Testis (tissue), 5 donors: ENCODE measurements at regions of chr6 and their contacts with region 1.

Region 1: GRCh38 chr6:44265007-44265721 is at the start of gene NFKBIE:
- DNase-seq: peak; percentile 98
- H3K4me3 ChIP-seq: peak within 1 kb of the TSS; percentile 85 to 87
- H3K27ac ChIP-seq: peak within 1 kb of the TSS; percentile 77 to 87
- H3K4me1 ChIP-seq: peaks cover 23% of the 10 kb centered on the region
- H3K27me3 ChIP-seq: no peaks in the 10 kb centered on the region
- CTCF ChIP-seq: peak in 1 of 3 experiments; percentile 25
- POLR2A ChIP-seq: no peak
- total RNA-seq, gene NFKBIE: 18.3 to 29.2 TPM

Region 2: DNA sequence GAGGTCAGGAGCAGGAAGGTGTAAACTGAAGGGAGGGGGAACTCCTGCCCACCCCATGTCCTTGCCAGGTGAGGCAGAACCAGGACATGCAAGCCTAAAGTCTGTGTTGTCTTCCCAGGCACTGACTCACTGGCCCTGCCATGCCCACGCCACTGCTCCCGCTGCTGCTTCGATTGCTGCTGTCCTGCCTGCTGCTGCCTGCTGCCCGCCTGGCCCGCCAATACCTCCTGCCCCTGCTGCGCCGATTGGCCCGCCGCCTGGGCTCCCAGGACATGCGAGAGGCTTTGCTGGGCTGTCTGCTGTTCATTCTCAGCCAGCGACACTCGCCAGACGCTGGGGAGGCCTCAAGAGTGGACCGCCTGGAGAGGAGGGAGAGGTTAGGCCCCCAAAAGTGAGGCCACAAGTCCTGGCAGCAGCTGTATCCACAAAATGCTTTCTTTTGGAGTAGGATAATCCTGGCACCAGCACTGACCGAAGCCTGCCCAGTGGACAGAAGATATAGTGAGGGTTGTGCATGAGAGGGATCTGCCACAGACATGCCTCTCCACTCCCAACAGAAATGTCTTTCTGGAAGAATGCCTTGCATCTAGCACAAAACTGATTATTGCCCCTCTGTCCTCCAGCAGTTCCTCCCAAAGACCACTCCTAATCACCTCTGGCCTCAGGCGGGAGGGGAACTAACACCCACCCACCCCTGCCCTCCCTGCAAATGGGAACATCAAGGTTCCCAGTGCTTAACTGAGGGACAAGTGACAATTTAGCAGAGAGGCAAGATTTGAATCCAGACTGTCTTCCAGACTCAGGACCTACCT is 47.6 kb before region 1 on chr6:
- intact Hi-C with region 1: no loop called
- DNase-seq: no peak
- H3K4me3 ChIP-seq: no peak overlapping the region
- H3K27ac ChIP-seq: peak overlapping the region; percentile 61 to 92
- H3K4me1 ChIP-seq: peaks cover 44% of the 10 kb centered on the region
- H3K27me3 ChIP-seq: no peaks in the 10 kb centered on the region
- CTCF ChIP-seq: no peak
- POLR2A ChIP-seq: no peak

Region 3: DNA sequence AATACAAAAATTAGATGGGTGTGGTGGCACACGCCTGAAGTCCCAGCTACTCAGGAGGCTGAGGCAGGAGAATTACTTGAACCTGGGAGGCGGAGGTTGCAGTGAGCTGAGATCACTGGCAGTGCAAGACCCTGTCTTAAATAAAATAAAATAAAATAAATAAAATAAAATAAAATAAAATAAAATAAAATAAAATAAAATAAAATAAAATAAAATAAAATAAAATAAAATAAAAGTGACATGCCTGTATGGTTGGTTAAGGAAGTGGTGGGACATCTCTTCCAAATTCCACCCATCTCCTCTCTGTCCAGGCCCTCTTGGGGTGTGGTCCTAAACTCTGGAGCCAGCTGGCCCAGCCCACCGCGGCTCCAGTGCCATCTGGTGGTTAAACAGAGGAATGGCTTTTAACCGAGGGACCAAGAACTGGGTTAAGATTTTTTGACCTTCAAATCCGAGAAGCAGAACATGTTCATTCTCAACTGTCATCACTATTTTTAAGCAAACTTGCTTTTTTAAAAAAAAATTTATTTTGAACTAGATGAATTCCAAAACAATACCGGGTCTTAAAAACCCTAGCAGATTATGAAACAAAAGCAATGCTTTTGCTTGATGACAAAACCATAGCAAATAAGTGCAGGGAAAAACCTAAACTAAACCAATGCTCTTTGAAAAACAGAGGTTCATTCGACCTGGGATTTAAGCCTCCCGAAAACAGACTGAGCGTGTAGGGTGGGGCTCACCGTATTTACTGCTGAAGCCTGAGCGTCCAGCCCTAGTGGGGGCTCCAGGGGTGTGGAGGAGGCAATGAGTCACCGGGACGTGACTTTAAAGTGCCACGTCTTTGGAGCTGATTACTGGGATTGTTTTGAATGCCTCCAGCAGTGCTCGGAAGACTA is 191.2 kb after region 1 on chr6:
- intact Hi-C with region 1: loop called (anchors 10 kb)
- DNase-seq: peak; percentile 54
- H3K4me3 ChIP-seq: no peak overlapping the region
- H3K27ac ChIP-seq: no peak overlapping the region
- H3K4me1 ChIP-seq: peaks cover 15% of the 10 kb centered on the region
- H3K27me3 ChIP-seq: no peaks in the 10 kb centered on the region
- CTCF ChIP-seq: peak; percentile 9 to 85 (median 68)
- POLR2A ChIP-seq: no peak